ENCODE measurements at regions of chr4 and their contacts with region 1.

Region 1: DNA sequence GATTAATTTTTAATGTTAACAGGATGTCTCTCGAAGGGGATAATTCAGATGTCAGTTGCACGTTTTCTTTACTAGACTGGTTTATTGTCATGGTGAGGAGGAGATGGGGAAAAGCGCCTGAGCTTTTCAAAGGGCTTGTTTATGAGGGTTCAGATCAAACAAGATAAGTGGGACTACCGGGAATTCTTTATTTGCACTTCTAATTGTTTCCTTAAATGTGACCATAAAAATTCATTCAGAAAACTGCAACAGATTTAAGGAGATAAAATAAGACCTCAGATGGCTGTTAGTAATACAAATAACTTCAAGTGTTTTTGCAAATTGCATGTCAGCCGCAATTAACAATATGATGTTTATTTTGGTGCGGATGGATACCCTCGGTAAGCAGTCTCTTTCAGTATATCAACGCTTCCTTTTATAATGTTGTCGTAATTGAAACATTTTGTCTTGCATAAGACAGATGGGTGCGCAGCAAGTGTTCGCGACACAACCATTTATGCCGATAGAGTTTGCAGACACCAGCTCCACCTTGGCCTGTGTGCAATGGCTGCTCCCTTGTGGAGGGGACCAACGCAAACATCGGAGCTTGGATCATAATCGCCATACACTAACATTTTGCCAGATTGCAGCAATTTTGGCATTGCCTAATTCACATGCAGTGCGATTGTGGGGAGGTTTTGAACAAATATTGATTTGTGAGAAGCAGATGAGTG is 151.1 kb downstream of the C4orf33 start:
- DNase-seq: no peak
- ATAC-seq: no peak
- H3K4me3 ChIP-seq: no peak overlapping the region
- H3K27ac ChIP-seq: no peak overlapping the region
- H3K4me1 ChIP-seq: no peaks in the 10 kb centered on the region
- H3K27me3 ChIP-seq: no peaks in the 10 kb centered on the region
- CTCF ChIP-seq: no peak
- POLR2A ChIP-seq: no peak

Region 2: GRCh38 chr4:129014566-129015509 is 232.2 kb before region 1 on chr4:
- in situ Hi-C with region 1: no loop called
- intact Hi-C with region 1: no loop called
- DNase-seq: no peak
- ATAC-seq: no peak
- H3K4me3 ChIP-seq: no peak overlapping the region
- H3K27ac ChIP-seq: no peak overlapping the region
- H3K4me1 ChIP-seq: no peaks in the 10 kb centered on the region
- H3K27me3 ChIP-seq: no peaks in the 10 kb centered on the region
- CTCF ChIP-seq: no peak
- POLR2A ChIP-seq: no peak

Region 3: DNA sequence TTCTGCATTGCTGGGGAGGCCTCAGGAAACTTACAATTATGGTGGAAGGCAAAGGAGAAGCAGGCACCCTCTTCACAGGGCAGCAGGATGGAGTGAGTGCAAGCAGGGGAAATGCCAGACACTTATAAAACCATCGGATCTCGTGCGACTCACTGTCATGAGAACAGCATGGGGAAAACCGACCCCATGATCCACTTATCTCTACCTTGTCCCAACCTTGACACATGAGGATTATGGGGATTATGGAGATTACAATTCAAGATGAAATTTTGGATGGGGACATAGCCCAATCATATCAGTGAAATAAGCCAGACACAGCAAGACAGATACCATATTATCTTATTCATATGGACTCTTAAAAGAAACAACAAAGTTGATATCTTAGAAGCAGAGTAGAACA is 16.2 kb before region 1 on chr4:
- in situ Hi-C with region 1: no loop called
- intact Hi-C with region 1: loop called (anchors 1 kb)
- DNase-seq: no peak
- ATAC-seq: no peak
- H3K4me3 ChIP-seq: no peak overlapping the region
- H3K27ac ChIP-seq: no peak overlapping the region
- H3K4me1 ChIP-seq: no peaks in the 10 kb centered on the region
- H3K27me3 ChIP-seq: no peaks in the 10 kb centered on the region
- CTCF ChIP-seq: no peak
- POLR2A ChIP-seq: no peak

Region 4: DNA sequence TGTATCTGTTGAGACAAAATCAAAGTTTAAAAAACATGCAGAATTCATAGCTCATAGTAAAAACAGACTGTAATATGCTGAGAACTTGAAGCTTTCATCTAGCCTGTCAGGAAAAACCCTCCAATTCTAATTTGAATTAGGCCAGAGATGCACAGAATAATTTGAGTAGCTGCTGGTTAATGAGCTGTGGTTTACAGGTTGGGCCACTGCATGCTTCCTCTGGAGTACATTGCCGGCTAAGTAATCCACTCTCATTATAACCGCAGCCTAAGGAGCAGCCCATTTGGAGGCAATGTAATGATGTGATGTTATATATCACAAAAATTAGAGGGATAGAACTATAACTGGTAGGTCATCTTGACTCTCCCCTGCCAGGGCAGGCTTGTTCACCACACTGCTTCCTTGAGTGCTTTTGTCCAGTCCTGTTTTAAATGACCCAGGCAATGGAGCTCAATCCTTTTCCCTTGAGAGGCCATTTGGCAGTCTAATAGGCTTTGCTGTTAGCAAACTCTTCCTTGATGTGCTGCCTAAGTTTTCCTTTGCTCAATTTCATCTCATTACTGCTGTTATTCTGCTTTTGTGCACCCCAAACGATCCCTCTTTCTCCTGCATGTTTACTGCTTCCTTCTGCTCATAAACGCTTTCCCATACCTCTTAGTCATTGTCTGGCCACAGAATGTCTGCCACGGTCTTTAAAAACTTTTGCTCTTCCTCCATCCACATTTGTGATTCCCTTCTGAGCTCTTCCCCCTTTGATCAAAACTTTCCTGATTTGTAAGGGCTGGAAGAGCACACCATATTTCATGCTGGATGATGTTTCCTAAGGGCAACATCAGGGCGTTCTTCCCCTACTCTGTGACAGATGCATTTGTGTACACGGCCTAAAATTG is 79.8 kb after region 1 on chr4:
- in situ Hi-C with region 1: no loop called
- intact Hi-C with region 1: no loop called
- DNase-seq: no peak
- ATAC-seq: no peak
- H3K4me3 ChIP-seq: no peak overlapping the region
- H3K27ac ChIP-seq: no peak overlapping the region
- H3K4me1 ChIP-seq: no peaks in the 10 kb centered on the region
- H3K27me3 ChIP-seq: no peaks in the 10 kb centered on the region
- CTCF ChIP-seq: no peak
- POLR2A ChIP-seq: no peak

Region 5: DNA sequence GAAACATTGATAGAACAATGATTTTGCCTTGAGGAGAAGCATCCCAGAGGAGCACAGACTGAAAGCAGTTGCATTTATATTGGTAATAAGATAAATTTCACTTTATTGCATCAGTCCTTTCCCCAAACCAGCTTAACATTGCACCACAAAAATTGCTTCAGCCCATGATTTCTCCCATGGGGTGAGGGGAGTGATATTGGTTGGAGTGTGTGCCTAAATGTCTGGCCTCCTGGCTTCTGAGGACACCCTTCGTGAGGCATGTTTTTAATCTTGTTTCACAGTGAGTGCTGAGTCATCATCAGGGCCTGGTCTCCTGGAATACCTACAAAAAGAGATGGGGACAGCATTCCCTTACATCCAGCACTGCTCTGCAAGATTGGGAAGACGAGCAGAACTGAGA is 336.9 kb after region 1 on chr4:
- in situ Hi-C with region 1: no loop called
- intact Hi-C with region 1: no loop called
- DNase-seq: peak; percentile 25 to 49
- ATAC-seq: peak; percentile 81 to 91
- H3K4me3 ChIP-seq: no peak overlapping the region
- H3K27ac ChIP-seq: no peak overlapping the region
- H3K4me1 ChIP-seq: no peaks in the 10 kb centered on the region
- H3K27me3 ChIP-seq: no peaks in the 10 kb centered on the region
- CTCF ChIP-seq: no peak
- POLR2A ChIP-seq: no peak

Measured in gastrocnemius medialis (tissue), 4 donors.